Panc1 (cell line): ENCODE measurements at regions of chr7 and their contacts with region 1.

Region 1: GRCh38 chr7:155093596-155093995 is 23.5 kb downstream of the HTR5A start:
- DNase-seq: no peak
- ATAC-seq: no peak
- H3K4me3 ChIP-seq: no peak overlapping the region
- H3K27ac ChIP-seq: no peak overlapping the region
- H3K4me1 ChIP-seq: 0 out of 2 replicates have a peak, but pooled peaks cover 2% of the 10 kb centered on the region
- H3K27me3 ChIP-seq: no peaks in the 10 kb centered on the region
- CTCF ChIP-seq: no peak

Region 2: DNA sequence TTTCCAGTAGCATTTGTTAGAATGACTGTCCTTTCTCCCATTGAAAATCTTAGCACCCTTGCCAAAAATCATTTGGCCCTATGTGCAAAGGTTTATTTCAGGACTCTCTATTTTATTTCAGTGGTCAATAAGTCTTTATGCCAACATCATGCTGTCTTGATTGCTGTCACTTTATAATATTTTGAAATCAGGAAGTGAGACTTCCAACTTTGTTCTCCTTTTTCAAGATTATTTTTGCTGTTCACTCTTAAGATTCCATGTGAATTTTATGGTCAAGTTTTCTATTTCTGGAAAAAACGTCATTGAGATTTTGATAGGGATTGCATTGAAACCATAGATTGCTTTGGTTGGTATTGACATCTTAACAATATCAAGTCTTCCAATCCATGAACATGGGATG is 155.8 kb before region 1 on chr7:
- CTCF ChIA-PET with region 1: no interaction called
- POLR2A ChIA-PET with region 1: interaction called, 15 read pairs
- in situ Hi-C with region 1: no loop called
- intact Hi-C with region 1: no loop called
- DNase-seq: no peak
- ATAC-seq: no peak
- H3K4me3 ChIP-seq: no peak overlapping the region
- H3K27ac ChIP-seq: no peak overlapping the region
- H3K4me1 ChIP-seq: no peaks in the 10 kb centered on the region
- H3K27me3 ChIP-seq: no peaks in the 10 kb centered on the region
- CTCF ChIP-seq: no peak

Region 3: DNA sequence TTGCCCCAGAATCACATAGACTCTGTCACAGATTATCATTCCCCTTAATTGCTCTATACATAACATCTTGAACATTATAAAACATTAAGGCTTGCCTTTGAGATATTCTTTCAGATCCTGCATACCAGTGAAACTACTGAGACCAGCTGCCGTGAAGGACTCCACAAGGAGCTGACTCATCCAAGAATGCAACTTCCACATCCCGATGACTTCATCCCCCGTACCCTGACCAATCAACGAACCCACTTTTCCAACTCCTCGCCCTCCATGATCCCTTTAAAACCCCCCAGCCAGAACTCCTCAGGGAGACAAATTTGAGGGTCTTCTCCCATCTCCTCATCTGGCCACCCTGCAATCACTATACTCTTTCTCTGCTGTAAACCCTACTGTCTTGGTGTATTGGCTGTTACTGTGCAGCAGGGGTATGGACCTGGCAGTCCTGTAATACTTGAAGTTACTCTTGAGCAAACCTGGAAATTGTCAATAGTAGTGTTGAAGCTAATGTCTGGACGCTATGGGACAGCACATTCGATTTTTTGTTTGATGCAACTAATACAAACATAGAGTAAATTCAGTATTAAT is 26.3 kb after region 1 on chr7:
- CTCF ChIA-PET with region 1: no interaction called
- POLR2A ChIA-PET with region 1: no interaction called
- in situ Hi-C with region 1: no loop called
- intact Hi-C with region 1: no loop called
- DNase-seq: no peak
- ATAC-seq: no peak
- H3K4me3 ChIP-seq: no peak overlapping the region
- H3K27ac ChIP-seq: no peak overlapping the region
- H3K4me1 ChIP-seq: no peaks in the 10 kb centered on the region
- H3K27me3 ChIP-seq: no peaks in the 10 kb centered on the region
- CTCF ChIP-seq: no peak

Region 4: DNA sequence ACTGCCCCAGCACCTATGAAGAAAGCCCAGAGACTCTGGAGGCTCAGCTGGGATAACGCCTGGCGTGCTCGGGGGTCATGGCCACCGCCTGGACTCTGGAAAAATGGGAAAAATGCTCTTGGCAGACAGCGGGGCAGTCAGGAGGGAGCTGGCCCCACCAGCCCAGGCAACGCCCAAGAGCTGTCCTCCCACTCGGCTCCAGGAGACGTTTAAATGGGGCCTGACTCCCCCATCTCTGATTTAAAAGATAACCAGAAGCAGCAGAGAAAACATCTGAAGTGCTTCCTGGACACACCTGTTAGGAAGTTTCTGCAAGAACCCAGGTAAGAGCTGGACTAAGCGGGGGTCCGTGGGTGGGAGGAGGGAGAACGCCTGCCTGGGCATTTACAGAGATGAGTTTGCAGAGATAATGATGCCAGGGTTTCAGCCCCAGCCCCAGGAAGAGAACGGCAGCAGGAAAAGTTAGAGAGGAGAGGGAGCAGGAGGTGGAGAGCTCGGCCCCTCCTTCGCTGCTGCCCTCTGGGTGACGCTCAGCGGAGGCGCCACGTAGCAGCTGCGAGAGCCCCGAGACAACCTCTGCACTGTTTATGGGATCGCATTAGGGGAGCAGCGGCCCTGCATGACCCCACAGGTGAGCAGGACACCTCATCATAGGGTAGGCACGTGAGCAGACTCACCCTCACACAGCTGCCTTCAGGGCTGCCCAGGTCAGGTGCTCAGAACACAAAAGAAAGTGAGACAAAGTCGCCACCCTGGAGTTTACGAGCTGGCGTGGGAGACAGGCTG is 120.6 kb after region 1 on chr7:
- CTCF ChIA-PET with region 1: no interaction called
- POLR2A ChIA-PET with region 1: no interaction called
- in situ Hi-C with region 1: no loop called
- intact Hi-C with region 1: no loop called
- DNase-seq: no peak
- ATAC-seq: peak; percentile 31
- H3K4me3 ChIP-seq: peak overlapping the region in 1 of 2 experiments; percentile 25; a peak in 2 of 4 replicates
- H3K27ac ChIP-seq: 0 out of 2 replicates have a peak overlapping the region, but pooled peaks have one; percentile 29
- H3K4me1 ChIP-seq: peaks cover 15% of the 10 kb centered on the region
- H3K27me3 ChIP-seq: no peaks in the 10 kb centered on the region; the same call in 1 of the 2 replicates
- CTCF ChIP-seq: no peak